ENCODE measurements at regions of chr1 and their contacts with region 1.

Region 1: DNA sequence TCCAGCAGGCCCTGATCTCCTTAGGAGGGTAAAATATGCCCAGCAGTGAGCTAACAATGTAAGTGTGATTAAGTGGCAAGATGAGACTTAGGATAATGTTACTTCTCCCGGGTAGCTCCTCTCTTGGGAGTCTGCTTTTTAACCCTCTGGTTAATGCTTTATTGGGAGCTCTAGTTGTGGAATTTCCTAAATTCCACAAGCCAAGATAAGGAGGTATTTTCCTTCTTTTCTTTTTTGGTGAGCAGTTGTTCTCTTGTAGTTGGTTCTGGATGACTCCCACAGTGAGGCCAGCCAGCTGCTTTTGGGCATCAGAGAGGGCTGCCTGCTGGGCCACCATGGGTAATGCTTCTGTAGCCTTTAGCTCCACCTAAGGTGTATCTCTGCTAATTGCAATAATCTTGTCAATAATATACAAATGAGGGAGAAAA is 19.3 kb downstream of the C1orf52 start:
- DNase-seq: no peak
- H3K4me3 ChIP-seq: no peak overlapping the region
- CTCF ChIP-seq: no peak
- POLR2A ChIP-seq: no peak

Region 2: DNA sequence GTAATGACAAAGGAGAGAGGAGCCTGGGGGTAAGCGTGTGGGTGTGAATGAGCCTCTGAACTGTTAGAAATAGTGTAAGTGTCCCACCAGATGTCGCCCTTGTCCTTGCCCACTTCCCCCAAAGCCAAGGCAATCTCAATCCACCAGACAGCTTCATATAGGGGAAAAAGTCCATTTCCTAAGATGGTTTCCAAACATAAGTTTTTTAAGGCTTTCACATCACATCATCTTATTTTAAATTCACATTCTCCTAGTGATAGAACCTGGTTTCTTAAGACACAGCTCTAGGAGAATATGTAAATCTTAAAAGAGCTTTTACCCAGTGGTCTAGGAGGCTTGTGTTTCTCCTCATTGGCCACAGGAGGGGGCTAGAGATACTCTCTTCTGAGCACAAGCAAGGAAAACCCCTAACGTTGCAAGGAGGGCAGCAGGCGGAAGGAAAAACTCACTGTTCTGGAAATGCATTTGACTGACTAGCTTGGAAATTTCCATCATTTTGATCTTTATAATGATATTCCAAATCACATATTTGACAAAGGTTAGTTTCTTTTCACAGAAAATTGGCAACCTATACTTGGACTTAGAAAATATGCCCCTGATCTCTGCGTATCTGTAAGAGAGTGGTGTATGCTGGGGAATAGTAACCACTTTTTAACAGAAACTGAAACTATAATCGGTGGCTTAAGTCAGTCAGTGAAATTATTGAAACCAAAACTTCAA is 295.3 kb before region 1 on chr1:
- intact Hi-C with region 1: loop called (anchors 10 kb)
- DNase-seq: peak in 1 of 2 donors; percentile 51
- H3K4me3 ChIP-seq: no peak overlapping the region
- CTCF ChIP-seq: peak in 1 of 3 donors; percentile 83
- POLR2A ChIP-seq: no peak

Region 3: GRCh38 chr1:85109475-85109874 is 130.7 kb before region 1 on chr1:
- intact Hi-C with region 1: loop called (anchors 5 kb)
- DNase-seq: peak; percentile 26 to 89
- H3K4me3 ChIP-seq: no peak overlapping the region
- CTCF ChIP-seq: peak in 1 of 3 donors; percentile 37
- POLR2A ChIP-seq: no peak

Region 4: GRCh38 chr1:85188530-85188929 is 51.7 kb before region 1 on chr1:
- intact Hi-C with region 1: no loop called
- DNase-seq: no peak
- H3K4me3 ChIP-seq: no peak overlapping the region
- CTCF ChIP-seq: no peak
- POLR2A ChIP-seq: no peak